ENCODE measurements at regions of chr6 and their contacts with region 1.

Region 1: DNA sequence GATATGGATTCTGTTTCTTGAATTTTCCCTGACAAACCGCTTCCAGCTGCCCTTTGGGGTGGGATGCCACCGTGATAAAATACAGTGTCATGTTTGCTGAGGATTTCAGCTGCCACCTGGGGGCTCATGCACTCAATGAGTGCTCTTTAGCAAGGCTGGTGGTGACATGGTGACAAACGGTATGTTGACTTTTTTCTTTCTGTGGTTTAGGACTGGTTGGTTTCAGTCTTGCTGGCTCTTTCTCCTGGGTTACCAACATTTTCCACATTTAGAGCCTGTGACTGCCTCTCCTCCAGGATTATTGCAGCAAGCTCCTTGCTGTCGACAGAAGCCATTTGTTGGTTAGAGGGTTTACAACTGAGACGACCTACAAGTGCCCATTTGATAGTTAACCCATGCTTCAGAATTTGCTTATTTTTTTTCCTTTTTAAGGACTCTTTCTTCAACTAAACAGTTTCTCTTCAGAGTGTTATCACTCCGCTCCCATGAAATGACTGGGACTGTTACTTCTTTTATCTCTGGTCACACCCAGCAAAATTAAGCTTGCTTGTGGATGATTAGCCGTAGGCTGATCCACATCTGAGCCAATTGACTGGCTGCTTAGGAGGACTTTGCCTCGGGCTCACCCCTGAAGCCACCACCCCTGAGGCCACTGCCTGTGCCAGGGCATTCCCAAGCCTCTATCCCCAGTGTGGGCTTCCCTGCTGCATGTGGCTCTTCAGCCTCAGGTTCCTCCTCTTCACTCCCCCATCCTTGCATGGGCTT is 48.4 kb upstream of the CDYL start:
- DNase-seq: peak; percentile 58 to 89 (median 72)
- ATAC-seq: peak; percentile 86
- H3K4me3 ChIP-seq: peak overlapping the region; percentile 8; the same call in 1 of the 2 replicates
- H3K27ac ChIP-seq: peak overlapping the region; percentile 93
- H3K4me1 ChIP-seq: peaks cover 27 to 39% of the 10 kb centered on the region in 2 experiments
- H3K27me3 ChIP-seq: no peaks in the 10 kb centered on the region
- CTCF ChIP-seq: peak; percentile 56 to 72 (median 69)
- EP300 ChIP-seq: peak; percentile 96
- POLR2A ChIP-seq: no peak; the same call in 1 of the 2 replicates
- RAD21 ChIP-seq: peak; percentile 59 to 65

Region 2: DNA sequence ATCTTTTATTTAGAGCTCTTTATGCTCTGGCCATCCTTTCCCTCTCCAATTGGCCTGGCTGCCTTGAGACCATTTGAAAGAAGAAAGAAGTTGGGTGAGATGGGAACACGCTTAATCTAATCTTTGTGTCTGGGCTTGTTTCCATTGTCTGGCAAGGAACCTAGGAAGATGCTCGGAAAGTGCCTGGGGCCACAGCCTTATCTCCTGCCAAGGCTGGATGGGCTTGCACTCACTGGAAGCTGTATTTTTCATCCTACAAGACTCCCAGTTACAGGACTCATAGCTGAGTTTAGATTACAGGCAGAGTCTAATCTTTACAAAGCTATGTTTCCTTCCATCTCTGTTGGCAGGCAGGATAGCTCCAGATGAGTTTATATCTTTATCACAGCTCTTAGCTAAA is 15.2 kb after region 1 on chr6:
- CTCF ChIA-PET with region 1: no interaction called
- POLR2A ChIA-PET with region 1: interaction called, 10 read pairs
- in situ Hi-C with region 1: no loop called
- intact Hi-C with region 1: no loop called
- DNase-seq: no peak
- ATAC-seq: no peak
- H3K4me3 ChIP-seq: no peak overlapping the region
- H3K27ac ChIP-seq: no peak overlapping the region
- H3K4me1 ChIP-seq: peaks cover 3 to 4% of the 10 kb centered on the region in 2 experiments; a peak in 2 of 5 replicates
- H3K27me3 ChIP-seq: peaks cover 0 to 4% of the 10 kb centered on the region in 2 experiments; a peak in 1 of 5 replicates
- CTCF ChIP-seq: no peak
- EP300 ChIP-seq: no peak
- POLR2A ChIP-seq: no peak
- RAD21 ChIP-seq: no peak

Region 3: DNA sequence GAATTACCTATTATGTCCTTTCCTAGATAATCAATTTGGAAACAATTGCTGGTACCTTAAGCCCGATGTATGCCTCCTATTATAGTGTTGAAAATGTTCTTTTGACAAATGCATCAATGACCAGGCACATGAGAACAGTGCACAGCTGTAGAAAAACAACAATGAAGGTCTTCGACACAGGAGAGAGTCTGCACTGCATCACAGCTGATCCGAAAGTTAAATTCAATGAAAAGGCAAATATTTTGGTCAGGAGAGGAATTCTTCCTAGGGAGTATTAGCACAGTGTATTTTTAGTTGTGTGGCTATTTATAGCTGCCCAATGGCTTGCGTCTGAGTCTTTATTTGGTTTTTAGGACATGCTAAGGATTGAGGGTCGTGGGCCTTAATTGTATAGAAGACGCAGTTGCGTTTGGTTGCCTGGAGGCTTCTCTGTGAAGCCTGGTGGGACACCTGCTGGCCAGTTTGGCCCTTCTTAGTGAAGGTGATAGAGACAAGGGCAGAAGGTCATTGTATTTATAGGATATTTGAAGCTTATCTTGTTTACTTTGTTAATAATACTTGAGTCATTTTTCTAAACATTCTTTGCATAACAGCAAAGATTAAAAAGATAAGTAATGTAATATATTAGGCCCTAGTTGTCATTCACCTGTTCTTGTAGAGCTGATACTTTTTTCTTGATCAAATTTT is 120.7 kb after region 1 on chr6:
- CTCF ChIA-PET with region 1: no interaction called
- POLR2A ChIA-PET with region 1: no interaction called
- in situ Hi-C with region 1: no loop called
- intact Hi-C with region 1: loop called (anchors 5 kb)
- DNase-seq: peak in 3 of 4 experiments; percentile 36 to 73 (median 49)
- ATAC-seq: peak; percentile 94
- H3K4me3 ChIP-seq: no peak overlapping the region
- H3K27ac ChIP-seq: no peak overlapping the region
- H3K4me1 ChIP-seq: peaks cover under 1 to 17% of the 10 kb centered on the region in 2 experiments; a peak in 4 of 5 replicates
- H3K27me3 ChIP-seq: no peaks in the 10 kb centered on the region
- CTCF ChIP-seq: peak; percentile 74 to 81 (median 74)
- EP300 ChIP-seq: no peak
- POLR2A ChIP-seq: no peak
- RAD21 ChIP-seq: peak; percentile 69 to 88

Region 4: GRCh38 chr6:4914420-4915159 is 186.7 kb after region 1 on chr6:
- CTCF ChIA-PET with region 1: no interaction called
- POLR2A ChIA-PET with region 1: no interaction called
- in situ Hi-C with region 1: no loop called
- intact Hi-C with region 1: loop called (anchors 5 kb)
- DNase-seq: no peak
- ATAC-seq: no peak
- H3K4me3 ChIP-seq: no peak overlapping the region
- H3K27ac ChIP-seq: no peak overlapping the region
- H3K4me1 ChIP-seq: peaks cover 20 to 36% of the 10 kb centered on the region in 2 experiments; a peak in 4 of 5 replicates
- H3K27me3 ChIP-seq: no peaks in the 10 kb centered on the region
- CTCF ChIP-seq: no peak
- EP300 ChIP-seq: no peak
- POLR2A ChIP-seq: no peak
- RAD21 ChIP-seq: no peak

Region 5: DNA sequence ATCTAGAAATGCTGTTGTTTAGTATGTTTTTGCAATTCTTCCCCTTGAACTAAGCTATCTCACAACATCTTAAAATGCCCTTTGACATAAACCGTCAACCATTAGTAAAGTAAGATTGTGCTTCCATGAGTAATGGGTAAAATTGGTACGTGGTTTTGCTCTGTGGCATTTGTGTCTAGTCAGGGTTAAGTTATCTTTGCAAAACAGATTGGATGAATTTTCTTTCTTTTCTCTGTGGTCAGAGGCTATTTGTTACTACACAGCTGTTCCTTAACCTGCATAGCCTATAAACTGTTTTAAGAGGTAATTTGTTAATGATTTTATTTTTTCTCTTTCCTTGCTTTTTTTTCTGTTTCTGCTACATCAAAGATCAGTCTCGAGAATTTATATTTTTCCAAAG is 200.6 kb after region 1 on chr6:
- CTCF ChIA-PET with region 1: no interaction called
- POLR2A ChIA-PET with region 1: no interaction called
- in situ Hi-C with region 1: no loop called
- intact Hi-C with region 1: loop called (anchors 5 kb)
- DNase-seq: peak; percentile 70 to 82 (median 78)
- ATAC-seq: peak; percentile 91
- H3K4me3 ChIP-seq: no peak overlapping the region
- H3K27ac ChIP-seq: peak overlapping the region; percentile 39; the same call in 1 of the 3 replicates
- H3K4me1 ChIP-seq: peaks cover 9 to 34% of the 10 kb centered on the region in 2 experiments
- H3K27me3 ChIP-seq: no peaks in the 10 kb centered on the region
- CTCF ChIP-seq: no peak
- EP300 ChIP-seq: peak; percentile 96
- POLR2A ChIP-seq: no peak
- RAD21 ChIP-seq: 0 out of 4 replicates have a peak, but pooled peaks of 1 of the 2 experiments have one; percentile 7